PC-9 (cell line): ENCODE measurements at regions of chr3 and their contacts with region 1.

Region 1: DNA sequence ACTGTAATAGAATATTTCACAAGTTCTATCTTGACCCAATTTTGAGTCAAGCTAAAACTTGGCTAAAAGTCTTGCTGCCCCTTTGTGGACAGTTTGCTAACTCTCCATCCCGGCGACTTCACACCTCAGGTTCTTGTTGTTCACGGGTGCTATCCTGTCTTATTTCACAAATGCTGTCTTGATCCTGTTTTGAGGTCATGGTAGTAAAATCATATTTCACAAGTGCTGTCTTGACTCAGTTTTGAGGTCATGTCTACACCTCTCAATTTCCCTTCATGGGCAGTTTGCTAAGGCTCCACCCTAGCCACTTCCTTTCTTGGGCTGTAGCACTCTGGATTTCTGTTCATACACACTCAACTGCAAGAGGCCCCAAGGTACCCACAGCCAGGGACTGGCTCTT is 45.0 kb upstream of the GK5 start:
- DNase-seq: no peak
- H3K4me3 ChIP-seq: no peak overlapping the region
- H3K27ac ChIP-seq: no peak overlapping the region
- H3K4me1 ChIP-seq: peaks cover 13% of the 10 kb centered on the region
- H3K27me3 ChIP-seq: no peaks in the 10 kb centered on the region
- CTCF ChIP-seq: no peak

Region 2: DNA sequence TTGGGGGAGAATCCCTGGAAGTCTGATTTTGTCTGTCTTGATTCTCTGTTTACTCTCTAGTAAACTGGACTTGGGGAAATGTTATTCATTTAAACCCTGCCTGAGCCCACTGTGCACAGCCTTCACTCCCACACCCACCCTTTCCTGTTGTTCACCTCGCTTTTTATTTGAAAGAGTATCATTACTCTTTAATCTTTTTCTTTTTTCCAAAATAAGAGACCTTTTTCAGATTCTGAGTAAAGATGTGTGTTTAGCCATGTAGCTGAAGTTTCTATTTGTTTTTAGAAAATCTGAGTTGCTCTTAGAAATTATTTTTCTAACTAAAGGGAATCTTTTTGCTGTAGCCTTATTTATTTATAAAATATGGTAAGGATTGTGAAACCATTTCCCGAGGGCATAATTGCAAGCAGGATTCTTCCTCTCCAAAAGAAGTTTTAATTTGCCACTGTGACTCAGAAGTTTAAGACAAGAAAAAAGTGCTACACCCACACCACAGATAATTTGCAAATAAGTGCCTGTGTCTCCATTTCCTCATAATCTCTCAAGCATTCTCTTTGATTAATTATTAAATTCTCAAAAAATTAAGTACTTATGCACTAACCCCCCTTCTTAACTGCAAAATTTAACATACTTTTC is 740.2 kb before region 1 on chr3:
- CTCF ChIA-PET with region 1: no interaction called
- POLR2A ChIA-PET with region 1: no interaction called
- intact Hi-C with region 1: no loop called
- DNase-seq: peak in 1 of 2 experiments; percentile 78
- H3K4me3 ChIP-seq: peak overlapping the region; percentile 19; the same call in 1 of the 2 replicates
- H3K27ac ChIP-seq: peak overlapping the region; percentile 77
- H3K4me1 ChIP-seq: peaks cover 31% of the 10 kb centered on the region
- H3K27me3 ChIP-seq: no peaks in the 10 kb centered on the region
- CTCF ChIP-seq: no peak

Region 3: GRCh38 chr3:142165194-142165593 is 105.2 kb before region 1 on chr3:
- CTCF ChIA-PET with region 1: no interaction called
- POLR2A ChIA-PET with region 1: interaction called, 10 read pairs
- intact Hi-C with region 1: no loop called
- DNase-seq: no peak
- H3K4me3 ChIP-seq: no peak overlapping the region
- H3K27ac ChIP-seq: no peak overlapping the region
- H3K4me1 ChIP-seq: no peaks in the 10 kb centered on the region
- H3K27me3 ChIP-seq: no peaks in the 10 kb centered on the region
- CTCF ChIP-seq: no peak

Region 4: GRCh38 chr3:142226484-142226883 is 43.9 kb before region 1 on chr3:
- CTCF ChIA-PET with region 1: no interaction called
- POLR2A ChIA-PET with region 1: no interaction called
- intact Hi-C with region 1: loop called (anchors 1 kb)
- DNase-seq: no peak
- H3K4me3 ChIP-seq: no peak overlapping the region
- H3K27ac ChIP-seq: no peak overlapping the region
- H3K4me1 ChIP-seq: peaks cover 10% of the 10 kb centered on the region
- H3K27me3 ChIP-seq: no peaks in the 10 kb centered on the region
- CTCF ChIP-seq: no peak; the same call in 1 of the 2 replicates

Region 5: GRCh38 chr3:142481196-142481595 is 210.8 kb after region 1 on chr3:
- CTCF ChIA-PET with region 1: no interaction called
- POLR2A ChIA-PET with region 1: no interaction called
- intact Hi-C with region 1: no loop called
- DNase-seq: no peak
- H3K4me3 ChIP-seq: no peak overlapping the region
- H3K27ac ChIP-seq: no peak overlapping the region
- H3K4me1 ChIP-seq: no peaks in the 10 kb centered on the region
- H3K27me3 ChIP-seq: no peaks in the 10 kb centered on the region
- CTCF ChIP-seq: no peak

Region 6: DNA sequence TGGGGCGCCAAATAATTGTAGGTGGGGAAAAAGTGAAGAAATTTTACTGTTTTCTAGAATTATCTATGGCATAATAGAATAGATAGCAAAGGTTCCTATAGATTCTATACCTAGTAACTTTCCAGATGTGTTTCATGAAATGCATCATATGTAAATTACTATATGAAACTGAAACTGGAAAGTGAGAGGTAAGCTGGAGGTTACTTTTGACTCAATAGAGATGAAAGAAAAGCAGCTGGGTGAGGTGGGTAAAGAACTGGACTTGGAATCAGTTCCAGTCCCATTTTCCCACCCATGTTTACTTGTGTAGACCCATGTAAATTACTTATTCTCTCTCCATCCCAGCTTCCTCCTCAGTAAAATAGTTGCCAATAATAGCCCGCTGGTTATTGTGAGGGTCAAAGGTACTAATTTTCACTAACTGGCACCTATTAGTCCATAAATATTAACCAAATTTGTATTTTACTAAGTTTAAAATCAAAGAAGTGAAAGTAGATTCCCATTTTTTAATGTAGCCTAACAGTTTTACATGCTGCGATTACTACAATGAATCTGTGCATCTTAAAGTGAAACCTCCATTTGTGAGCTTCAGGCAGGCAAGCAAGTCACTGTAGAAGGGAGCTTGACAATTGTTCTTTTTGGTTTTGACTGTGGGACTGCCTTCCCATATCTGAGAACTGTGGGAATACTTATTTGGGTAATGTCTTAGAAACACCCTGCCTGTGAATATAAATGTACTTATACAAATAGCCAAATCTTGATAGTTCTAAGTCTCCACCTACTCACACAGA is 1265.8 kb after region 1 on chr3:
- CTCF ChIA-PET with region 1: no interaction called
- POLR2A ChIA-PET with region 1: no interaction called
- intact Hi-C with region 1: no loop called
- DNase-seq: no peak
- H3K4me3 ChIP-seq: no peak overlapping the region
- H3K27ac ChIP-seq: no peak overlapping the region
- H3K4me1 ChIP-seq: no peaks in the 10 kb centered on the region
- H3K27me3 ChIP-seq: no peaks in the 10 kb centered on the region
- CTCF ChIP-seq: no peak